Activated CD4-positive, alpha-beta T cell treated with anti-CD3 and anti-CD28 coated beads for 36 hours (primary cell): ENCODE measurements at regions of chr6 and their contacts with region 1.

Region 1: DNA sequence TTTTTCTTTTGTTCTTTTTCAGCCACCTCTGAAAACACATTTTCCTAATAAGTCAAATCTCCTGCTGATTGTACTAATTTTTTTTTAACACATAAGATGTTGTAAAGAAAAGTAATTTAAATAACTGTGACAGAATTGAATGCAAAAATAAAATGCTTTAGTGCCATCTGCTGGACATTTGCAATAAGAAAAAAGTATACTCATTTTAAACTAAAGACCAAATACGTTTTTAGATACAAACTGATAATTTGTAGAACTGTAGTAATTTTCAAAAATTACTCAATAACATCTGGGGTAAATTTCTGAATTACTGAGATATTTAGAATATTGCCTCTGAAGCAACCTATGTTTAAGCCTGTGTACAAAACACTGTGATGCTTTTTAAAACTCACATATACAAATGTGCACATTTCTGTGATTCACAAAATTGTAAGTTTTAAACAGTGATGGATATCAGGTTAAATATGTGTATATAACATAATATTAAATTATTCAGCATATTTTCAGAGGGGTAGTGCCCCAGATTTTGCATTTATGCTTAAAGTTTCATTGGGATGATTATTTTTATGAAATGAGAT is 198.7 kb downstream of the RIMS1 start:
- DNase-seq: no peak
- ATAC-seq: no peak
- H3K4me3 Mint-ChIP-seq: no peak overlapping the region
- H3K27ac Mint-ChIP-seq: no peak overlapping the region
- H3K4me1 Mint-ChIP-seq: no peaks in the 10 kb centered on the region
- H3K27me3 Mint-ChIP-seq: peaks cover 2% of the 10 kb centered on the region

Region 2: GRCh38 chr6:71383901-71384489 is 701.1 kb before region 1 on chr6:
- CTCF ChIA-PET with region 1: interaction called, 3 read pairs
- POLR2A ChIA-PET with region 1: no interaction called
- intact Hi-C with region 1: loop called (anchors 1 to 2 kb)
- DNase-seq: peak; percentile 12
- ATAC-seq: no peak
- H3K4me3 Mint-ChIP-seq: no peak overlapping the region
- H3K27ac Mint-ChIP-seq: no peak overlapping the region
- H3K4me1 Mint-ChIP-seq: no peaks in the 10 kb centered on the region
- H3K27me3 Mint-ChIP-seq: peaks cover 9% of the 10 kb centered on the region

Region 3: DNA sequence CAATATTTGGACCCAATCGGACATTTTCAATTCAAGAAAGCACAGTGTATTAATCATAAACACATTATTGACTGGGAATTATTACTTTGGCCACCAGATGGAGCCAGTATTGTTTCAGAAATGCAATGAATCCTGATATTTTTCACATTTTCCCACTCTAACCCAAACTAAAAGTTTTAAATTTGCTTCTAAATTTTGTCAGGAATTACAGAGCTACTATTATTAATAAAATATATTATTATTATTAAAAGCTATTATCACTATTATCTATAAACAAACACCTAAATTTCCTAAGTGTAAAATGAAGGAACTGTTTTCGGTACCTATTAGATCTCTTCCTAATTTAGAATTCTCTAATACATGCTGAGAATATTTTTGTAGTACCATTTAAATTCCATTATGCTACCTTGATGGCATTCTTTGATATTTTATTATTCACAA is 551.1 kb before region 1 on chr6:
- CTCF ChIA-PET with region 1: interaction called, 4 read pairs
- POLR2A ChIA-PET with region 1: no interaction called
- intact Hi-C with region 1: loop called (anchors 1 to 5 kb)
- DNase-seq: no peak
- ATAC-seq: no peak
- H3K4me3 Mint-ChIP-seq: no peak overlapping the region
- H3K27ac Mint-ChIP-seq: no peak overlapping the region
- H3K4me1 Mint-ChIP-seq: no peaks in the 10 kb centered on the region
- H3K27me3 Mint-ChIP-seq: no peaks in the 10 kb centered on the region

Region 4: GRCh38 chr6:71621918-71622519 is 463.1 kb before region 1 on chr6:
- CTCF ChIA-PET with region 1: no interaction called
- POLR2A ChIA-PET with region 1: no interaction called
- intact Hi-C with region 1: loop called in 1 of 2 experiments (anchors 5 kb)
- DNase-seq: no peak
- ATAC-seq: no peak
- H3K4me3 Mint-ChIP-seq: no peak overlapping the region
- H3K27ac Mint-ChIP-seq: no peak overlapping the region
- H3K4me1 Mint-ChIP-seq: no peaks in the 10 kb centered on the region
- H3K27me3 Mint-ChIP-seq: no peaks in the 10 kb centered on the region